ENCODE measurements at regions of chr2 and their contacts with region 1.

Region 1: DNA sequence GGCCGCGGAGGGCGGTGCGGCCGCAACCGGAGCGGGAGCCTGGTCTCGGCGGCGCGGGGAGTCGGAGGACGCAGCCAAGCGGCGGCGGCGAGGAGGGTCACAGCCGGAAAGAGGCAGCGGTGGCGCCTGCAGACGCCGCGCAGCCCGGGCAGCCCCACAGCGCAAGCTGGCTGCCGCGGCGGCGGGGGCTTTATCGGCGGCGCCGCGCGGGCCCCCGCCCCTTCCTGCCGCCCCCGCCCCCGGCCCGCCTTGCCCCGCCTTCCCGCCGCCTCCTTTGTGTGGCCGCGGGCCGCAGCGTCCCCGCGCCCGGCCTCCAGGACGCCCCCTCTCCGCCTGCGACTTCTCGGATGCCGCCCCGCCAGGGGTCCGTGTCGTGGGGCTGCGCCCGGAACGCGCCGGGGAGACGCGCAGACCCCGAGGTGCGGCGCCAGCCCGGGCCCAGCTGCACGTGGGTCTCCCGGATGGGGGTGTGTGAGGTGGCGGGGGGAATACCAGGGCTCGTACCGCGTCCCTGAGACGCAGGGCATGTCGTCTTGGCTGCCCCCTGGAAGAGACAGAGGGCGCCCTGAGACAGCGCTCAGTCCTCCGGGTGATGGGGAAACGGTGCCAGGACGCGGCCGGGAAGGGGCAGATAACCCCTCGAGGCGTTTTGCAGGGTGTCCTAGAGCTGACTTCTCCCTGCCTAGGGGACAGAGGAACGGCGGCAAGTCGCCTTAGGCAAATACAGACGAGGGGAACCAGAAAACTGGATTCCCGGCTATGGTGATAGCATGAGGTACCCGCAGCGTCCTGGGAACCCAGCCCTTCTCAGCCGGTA is at the start of gene SERPINE2:
- DNase-seq: peak; percentile 37
- ATAC-seq: peak; percentile 81
- H3K4me3 ChIP-seq: peak within 1 kb of the TSS; percentile 99
- H3K27ac ChIP-seq: peak within 1 kb of the TSS; percentile 29; the same call in 1 of the 2 replicates
- H3K4me1 ChIP-seq: peaks cover 15% of the 10 kb centered on the region
- H3K27me3 ChIP-seq: peaks cover 13% of the 10 kb centered on the region
- CTCF ChIP-seq: peak; percentile 52
- POLR2A ChIP-seq: no peak
- RAD21 ChIP-seq: peak; percentile 64
- total RNA-seq, gene SERPINE2: 21.1 and 24.0 TPM in 2 replicates

Region 2: DNA sequence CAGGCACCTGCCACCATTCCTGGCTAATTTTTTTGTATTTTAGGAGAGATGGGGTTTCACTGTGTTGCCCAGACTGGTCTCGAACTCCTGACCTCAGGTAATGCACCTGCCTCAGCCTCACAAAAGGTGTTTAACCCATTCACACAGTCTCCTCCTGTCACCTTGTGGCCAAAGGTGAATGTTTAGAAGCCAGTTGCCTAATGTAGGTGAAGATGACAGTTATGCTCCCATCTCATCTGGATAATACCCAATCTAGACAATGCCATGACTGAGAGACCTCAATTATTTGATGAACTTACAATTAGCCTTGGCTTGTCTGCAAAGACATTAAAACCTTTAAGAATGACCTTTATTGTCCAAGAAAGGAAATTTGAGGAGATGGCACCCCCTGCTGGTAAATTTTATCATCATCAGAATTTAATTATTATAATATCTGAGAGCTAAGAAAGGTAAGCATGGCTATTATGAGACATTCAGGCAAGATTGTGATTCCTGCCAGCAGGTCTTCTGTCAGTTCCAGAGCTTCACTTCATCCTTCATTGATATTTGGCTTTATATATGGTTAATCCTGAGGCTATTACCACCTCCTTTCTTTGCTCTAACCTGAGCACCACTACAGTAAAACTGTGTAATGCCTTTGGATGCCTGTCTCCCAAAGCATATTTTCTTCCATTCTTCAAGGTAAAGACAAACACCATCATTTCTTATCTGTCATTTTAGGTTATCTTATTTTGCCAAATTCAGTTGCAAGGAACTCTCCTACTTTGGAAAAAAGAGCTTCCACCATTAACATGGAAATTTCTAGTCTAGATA is 245.0 kb after region 1 on chr2:
- CTCF ChIA-PET with region 1: interaction called, 4 read pairs
- POLR2A ChIA-PET with region 1: no interaction called
- dilution Hi-C with region 1: no loop called
- in situ Hi-C with region 1: no loop called
- intact Hi-C with region 1: loop called (anchors 1 kb)
- DNase-seq: peak; percentile 25
- ATAC-seq: peak; percentile 46; the same call in 1 of the 2 replicates
- H3K4me3 ChIP-seq: no peak overlapping the region
- H3K27ac ChIP-seq: no peak overlapping the region
- H3K4me1 ChIP-seq: no peaks in the 10 kb centered on the region
- H3K27me3 ChIP-seq: peaks cover 14% of the 10 kb centered on the region
- CTCF ChIP-seq: peak; percentile 67
- POLR2A ChIP-seq: no peak
- RAD21 ChIP-seq: peak; percentile 82